Panc1 (cell line): ENCODE measurements at regions of chrX and their contacts with region 1.

Region 1: GRCh38 chrX:37905436-37906147 is 58.2 kb upstream of the DYNLT3 start:
- DNase-seq: no peak
- ATAC-seq: peak; percentile 63; the same call in 1 of the 2 replicates
- H3K4me3 ChIP-seq: peak overlapping the region; percentile 8 to 37; a peak in 3 of 4 replicates
- H3K27ac ChIP-seq: no peak overlapping the region
- H3K4me1 ChIP-seq: no peaks in the 10 kb centered on the region
- H3K27me3 ChIP-seq: peaks cover 4% of the 10 kb centered on the region; the same call in 1 of the 2 replicates
- CTCF ChIP-seq: peak; percentile 54

Region 2: DNA sequence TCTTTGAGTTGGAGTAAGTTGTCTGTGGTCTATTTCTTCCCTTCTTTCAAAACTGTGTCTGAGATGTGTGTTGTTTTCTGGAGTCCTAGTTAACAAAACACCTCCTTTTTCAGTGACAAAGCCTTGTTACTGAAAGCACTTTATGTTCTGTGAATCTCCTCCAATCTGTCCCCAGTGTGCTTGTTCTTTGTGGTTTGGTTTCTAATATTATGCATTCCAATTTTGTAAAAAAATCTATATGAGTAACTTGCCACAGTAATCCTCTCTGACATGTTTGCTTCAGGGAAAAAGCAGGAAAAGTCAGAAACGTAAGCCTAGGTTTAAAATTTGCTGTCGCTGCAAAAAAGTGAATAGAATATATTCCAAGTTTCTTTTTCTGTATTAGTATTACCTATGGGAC is 544.0 kb before region 1 on chrX:
- CTCF ChIA-PET with region 1: no interaction called
- POLR2A ChIA-PET with region 1: no interaction called
- in situ Hi-C with region 1: no loop called
- intact Hi-C with region 1: no loop called
- DNase-seq: no peak
- ATAC-seq: no peak
- H3K4me3 ChIP-seq: no peak overlapping the region
- H3K27ac ChIP-seq: no peak overlapping the region
- H3K4me1 ChIP-seq: no peaks in the 10 kb centered on the region
- H3K27me3 ChIP-seq: no peaks in the 10 kb centered on the region
- CTCF ChIP-seq: no peak

Region 3: GRCh38 chrX:37834937-37835336 is 70.7 kb before region 1 on chrX:
- CTCF ChIA-PET with region 1: no interaction called
- POLR2A ChIA-PET with region 1: interaction called, 11 read pairs
- in situ Hi-C with region 1: no loop called
- intact Hi-C with region 1: no loop called
- DNase-seq: no peak
- ATAC-seq: no peak
- H3K4me3 ChIP-seq: no peak overlapping the region
- H3K27ac ChIP-seq: no peak overlapping the region
- H3K4me1 ChIP-seq: no peaks in the 10 kb centered on the region
- H3K27me3 ChIP-seq: no peaks in the 10 kb centered on the region
- CTCF ChIP-seq: no peak